A549 (cell line): ENCODE measurements at regions of chr9 and their contacts with region 1.

Region 1: GRCh38 chr9:35790385-35791296 is 750 bp upstream of the NPR2 start:
- DNase-seq: peak; percentile 65 to 85
- ATAC-seq: peak; percentile 87 to 97
- H3K4me3 ChIP-seq: no peak overlapping the region
- H3K27ac ChIP-seq: peak overlapping the region in 1 of 2 experiments; percentile 22; a peak in 1 of 6 replicates
- H3K4me1 ChIP-seq: peaks cover 9% of the 10 kb centered on the region
- CTCF ChIP-seq: peak; percentile 91
- EP300 ChIP-seq: no peak
- POLR2A ChIP-seq: no peak
- RAD21 ChIP-seq: peak; percentile 85 to 92

Region 2: DNA sequence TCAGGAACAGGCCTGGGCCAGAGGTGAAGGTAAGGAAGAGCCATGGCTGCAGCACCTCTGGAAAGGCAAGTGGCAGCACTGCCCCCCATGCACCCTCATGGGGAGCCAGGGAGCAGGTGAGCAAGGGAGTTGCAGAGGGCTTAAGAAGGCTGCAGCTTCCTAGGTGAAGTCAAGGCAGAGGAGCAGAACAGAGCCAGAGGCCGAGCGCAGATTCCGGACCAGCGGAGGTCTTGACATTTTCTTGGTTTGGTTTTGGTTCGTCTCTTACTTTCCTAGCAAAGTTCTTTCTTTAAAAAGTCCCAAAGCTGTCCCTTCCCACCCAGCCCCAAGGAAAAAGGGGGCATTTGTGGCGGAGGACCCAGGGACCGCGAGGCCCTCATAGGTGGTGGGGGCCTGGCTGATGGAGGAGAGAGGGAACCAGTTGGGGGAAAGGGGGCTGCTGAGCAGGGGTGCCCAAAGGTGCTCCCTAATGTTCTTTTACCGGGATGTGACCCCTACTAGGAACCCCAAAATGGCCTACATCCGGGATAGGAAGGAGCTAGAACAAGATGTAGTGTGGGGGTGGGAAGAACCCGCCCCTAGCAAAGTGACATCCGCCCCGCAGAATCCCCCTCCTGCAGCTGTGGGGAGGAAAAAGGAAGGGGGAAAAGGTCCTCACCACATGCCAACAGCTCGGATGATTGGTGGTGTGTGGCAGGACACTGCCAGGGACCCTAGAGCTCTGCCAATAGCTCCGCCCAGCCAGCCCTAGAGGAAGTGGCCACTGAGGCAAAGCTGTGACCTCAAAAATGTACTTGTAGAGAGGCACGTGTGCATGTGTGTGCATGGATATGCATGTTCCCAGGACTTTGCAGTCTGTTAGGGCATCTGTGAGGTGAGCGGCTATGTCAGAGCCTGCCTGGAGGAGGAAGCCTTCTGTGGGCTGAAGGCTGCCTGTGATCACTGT is 171.5 kb before region 1 on chr9:
- CTCF ChIA-PET with region 1: no interaction called
- POLR2A ChIA-PET with region 1: no interaction called
- DNase-seq: no peak
- ATAC-seq: no peak
- H3K4me3 ChIP-seq: no peak overlapping the region
- H3K27ac ChIP-seq: no peak overlapping the region
- H3K4me1 ChIP-seq: no peaks in the 10 kb centered on the region
- CTCF ChIP-seq: no peak
- EP300 ChIP-seq: no peak
- POLR2A ChIP-seq: no peak
- RAD21 ChIP-seq: no peak

Region 3: DNA sequence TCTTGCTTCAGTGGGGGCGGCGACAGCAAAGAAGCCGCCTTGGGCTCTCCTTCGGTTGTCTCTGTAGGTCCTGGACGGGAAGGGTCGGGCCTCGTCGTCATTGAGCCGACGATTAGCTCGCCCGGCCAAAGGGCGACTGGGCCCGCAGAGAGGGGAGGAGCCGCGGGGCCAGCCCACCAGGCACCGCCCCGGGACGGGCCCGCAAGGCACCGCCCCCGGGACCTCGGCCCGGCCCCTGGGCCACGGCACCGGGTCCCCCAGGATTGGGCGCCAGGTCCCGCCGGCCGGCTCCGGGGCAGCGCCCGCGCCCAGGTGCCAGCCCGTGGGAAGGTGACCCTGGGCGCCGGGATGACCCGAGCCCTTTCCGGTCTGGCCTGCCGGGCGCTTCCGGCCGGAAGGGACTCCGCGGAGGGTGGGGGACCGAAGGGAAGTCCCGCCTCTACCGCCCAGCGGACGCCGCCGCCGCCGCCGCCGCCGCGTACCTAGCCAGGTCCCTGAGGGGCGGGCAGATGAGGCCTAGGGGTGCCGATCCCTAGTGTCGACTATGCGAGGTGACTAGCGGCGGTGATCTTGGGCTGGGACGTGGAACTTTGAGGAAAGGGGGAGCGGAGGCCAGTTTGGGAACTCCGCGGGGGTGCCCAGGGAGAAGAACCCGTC is 41.7 kb before region 1 on chr9 and contains the starts of genes GBA2 and RGP1:
- CTCF ChIA-PET with region 1: interaction called, 22 read pairs
- POLR2A ChIA-PET with region 1: no interaction called
- DNase-seq: peak; percentile 62 to 81
- ATAC-seq: peak; percentile 91 to 93
- H3K4me3 ChIP-seq: peak within 1 kb of the TSS; percentile 69
- H3K27ac ChIP-seq: peak within 1 kb of the TSS; percentile 84 to 99
- H3K4me1 ChIP-seq: peaks cover 30% of the 10 kb centered on the region
- CTCF ChIP-seq: no peak
- EP300 ChIP-seq: no peak
- POLR2A ChIP-seq: peak; percentile 42; the same call in 1 of the 2 replicates
- RAD21 ChIP-seq: no peak
- polyA plus RNA-seq, gene GBA2: 40.0 and 47.4 TPM in 2 replicates
- polyA plus RNA-seq, gene RGP1: 16.6 and 20.2 TPM in 2 replicates

Region 4: GRCh38 chr9:35774907-35775635 is 15.6 kb before region 1 on chr9:
- CTCF ChIA-PET with region 1: interaction called, 122 read pairs
- POLR2A ChIA-PET with region 1: no interaction called
- DNase-seq: no peak
- ATAC-seq: no peak; a peak in 1 of 6 replicates
- H3K4me3 ChIP-seq: no peak overlapping the region
- H3K27ac ChIP-seq: no peak overlapping the region
- H3K4me1 ChIP-seq: peaks cover 23% of the 10 kb centered on the region
- CTCF ChIP-seq: no peak
- EP300 ChIP-seq: no peak
- POLR2A ChIP-seq: no peak
- RAD21 ChIP-seq: no peak

Region 5: DNA sequence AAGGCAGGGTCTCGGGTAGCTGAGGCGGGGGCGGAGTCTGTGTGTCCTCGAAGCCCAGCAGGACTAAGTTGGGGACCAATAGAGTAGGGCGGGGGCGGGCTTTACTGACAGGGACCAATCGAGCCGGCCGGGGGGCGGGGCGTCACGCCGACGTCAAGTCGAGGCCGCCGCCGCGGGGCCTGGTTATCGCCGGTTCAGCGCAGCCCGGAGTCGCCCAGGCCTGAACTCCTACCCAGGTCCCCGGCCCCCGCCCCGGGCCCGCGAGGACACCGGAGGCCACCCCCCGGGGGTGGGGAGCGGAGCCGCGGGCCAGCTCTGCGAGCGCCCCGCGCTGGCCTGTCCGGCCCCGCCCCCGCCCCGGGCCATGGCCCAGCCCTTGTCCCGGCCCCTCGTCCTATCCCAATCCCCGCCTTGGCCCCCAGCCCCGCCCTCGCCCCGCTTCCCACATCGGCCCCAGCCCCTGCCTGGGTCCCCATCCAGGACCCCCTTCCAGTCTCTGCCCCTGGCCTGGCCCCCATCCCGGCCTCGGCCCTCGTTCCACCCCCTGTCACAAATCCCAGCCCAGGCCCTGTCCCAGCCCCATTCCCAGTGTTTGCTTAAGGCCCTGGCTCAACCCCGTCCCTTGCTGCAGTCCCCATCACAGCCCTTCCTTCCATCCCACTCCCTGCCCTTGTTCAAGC is 38.6 kb after region 1 on chr9 and contains the start of gene TMEM8B:
- CTCF ChIA-PET with region 1: interaction called, 41 read pairs
- POLR2A ChIA-PET with region 1: no interaction called
- DNase-seq: peak; percentile 90 to 97
- ATAC-seq: peak; percentile 86 to 93
- H3K4me3 ChIP-seq: peak within 1 kb of the TSS; percentile 80
- H3K27ac ChIP-seq: peak within 1 kb of the TSS; percentile 84 to 91
- H3K4me1 ChIP-seq: peaks cover 4% of the 10 kb centered on the region; the same call in 2 of the 3 replicates
- CTCF ChIP-seq: no peak
- EP300 ChIP-seq: no peak
- POLR2A ChIP-seq: no peak
- RAD21 ChIP-seq: no peak
- polyA plus RNA-seq, gene TMEM8B: 1.8 and 2.0 TPM in 2 replicates

Region 6: GRCh38 chr9:35871497-35871896 is 80.9 kb after region 1 on chr9:
- CTCF ChIA-PET with region 1: interaction called, 27 read pairs
- POLR2A ChIA-PET with region 1: no interaction called
- DNase-seq: no peak
- ATAC-seq: 0 out of 6 replicates have a peak, but pooled peaks of 1 of the 2 experiments have one; percentile 35
- H3K4me3 ChIP-seq: no peak overlapping the region
- H3K27ac ChIP-seq: no peak overlapping the region
- H3K4me1 ChIP-seq: peaks cover 2% of the 10 kb centered on the region; the same call in 1 of the 3 replicates
- CTCF ChIP-seq: no peak
- EP300 ChIP-seq: no peak
- POLR2A ChIP-seq: no peak
- RAD21 ChIP-seq: no peak

Region 7: DNA sequence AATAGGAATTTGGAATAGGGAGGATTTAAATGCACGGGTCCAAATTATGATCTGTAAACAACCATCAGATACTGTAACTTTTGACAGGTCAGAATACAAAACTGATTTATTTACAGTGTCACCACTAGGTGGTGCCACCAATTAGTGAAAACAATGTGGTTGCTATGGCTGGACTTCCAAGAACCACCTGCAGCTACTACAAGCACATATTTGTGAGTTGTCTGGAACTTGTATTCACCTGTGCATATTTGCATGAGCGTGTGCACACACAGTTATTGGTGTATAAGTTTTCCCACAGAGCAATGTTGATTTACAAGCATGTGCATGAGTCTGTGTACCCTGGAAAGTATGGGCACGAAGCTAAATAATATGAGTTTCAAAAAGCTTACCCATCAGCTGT is 112.4 kb after region 1 on chr9:
- CTCF ChIA-PET with region 1: interaction called, 16 read pairs
- POLR2A ChIA-PET with region 1: no interaction called
- DNase-seq: peak; percentile 74 to 79
- ATAC-seq: peak in 1 of 2 experiments; percentile 17; a peak in 1 of 6 replicates
- H3K4me3 ChIP-seq: no peak overlapping the region
- H3K27ac ChIP-seq: peak overlapping the region in 1 of 2 experiments; percentile 25; a peak in 2 of 6 replicates
- H3K4me1 ChIP-seq: peaks cover 38% of the 10 kb centered on the region
- CTCF ChIP-seq: peak; percentile 88
- EP300 ChIP-seq: no peak
- POLR2A ChIP-seq: no peak
- RAD21 ChIP-seq: peak; percentile 85 to 86